ENCODE measurements at regions of chr12 and their contacts with region 1.

Region 1: DNA sequence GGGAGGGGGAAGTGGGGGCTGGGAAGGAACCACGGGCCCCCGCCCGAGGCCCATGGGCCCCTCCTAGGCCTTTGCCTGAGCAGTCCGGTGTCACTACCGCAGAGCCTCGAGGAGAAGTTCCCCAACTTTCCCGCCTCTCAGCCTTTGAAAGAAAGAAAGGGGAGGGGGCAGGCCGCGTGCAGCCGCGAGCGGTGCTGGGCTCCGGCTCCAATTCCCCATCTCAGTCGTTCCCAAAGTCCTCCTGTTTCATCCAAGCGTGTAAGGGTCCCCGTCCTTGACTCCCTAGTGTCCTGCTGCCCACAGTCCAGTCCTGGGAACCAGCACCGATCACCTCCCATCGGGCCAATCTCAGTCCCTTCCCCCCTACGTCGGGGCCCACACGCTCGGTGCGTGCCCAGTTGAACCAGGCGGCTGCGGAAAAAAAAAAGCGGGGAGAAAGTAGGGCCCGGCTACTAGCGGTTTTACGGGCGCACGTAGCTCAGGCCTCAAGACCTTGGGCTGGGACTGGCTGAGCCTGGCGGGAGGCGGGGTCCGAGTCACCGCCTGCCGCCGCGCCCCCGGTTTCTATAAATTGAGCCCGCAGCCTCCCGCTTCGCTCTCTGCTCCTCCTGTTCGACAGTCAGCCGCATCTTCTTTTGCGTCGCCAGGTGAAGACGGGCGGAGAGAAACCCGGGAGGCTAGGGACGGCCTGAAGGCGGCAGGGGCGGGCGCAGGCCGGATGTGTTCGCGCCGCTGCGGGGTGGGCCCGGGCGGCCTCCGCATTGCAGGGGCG is at the start of gene GAPDH:
- DNase-seq: peak; percentile 95
- ATAC-seq: peak; percentile 69
- H3K4me3 ChIP-seq: peak within 1 kb of the TSS; percentile 94 to 99 (median 97)
- H3K27ac ChIP-seq: peak within 1 kb of the TSS; percentile 97
- H3K4me1 ChIP-seq: peaks cover 53% of the 10 kb centered on the region
- H3K27me3 ChIP-seq: no peaks in the 10 kb centered on the region; a peak in 1 of 5 replicates
- CTCF ChIP-seq: no peak
- EP300 ChIP-seq: peak; percentile 14 to 26; a peak in 2 of 4 replicates
- POLR2A ChIP-seq: peak in 1 of 2 experiments; percentile 98; a peak in 2 of 4 replicates
- RAD21 ChIP-seq: no peak
- total RNA-seq, gene GAPDH: 3,038 and 4,052 TPM in 2 replicates

Region 2: DNA sequence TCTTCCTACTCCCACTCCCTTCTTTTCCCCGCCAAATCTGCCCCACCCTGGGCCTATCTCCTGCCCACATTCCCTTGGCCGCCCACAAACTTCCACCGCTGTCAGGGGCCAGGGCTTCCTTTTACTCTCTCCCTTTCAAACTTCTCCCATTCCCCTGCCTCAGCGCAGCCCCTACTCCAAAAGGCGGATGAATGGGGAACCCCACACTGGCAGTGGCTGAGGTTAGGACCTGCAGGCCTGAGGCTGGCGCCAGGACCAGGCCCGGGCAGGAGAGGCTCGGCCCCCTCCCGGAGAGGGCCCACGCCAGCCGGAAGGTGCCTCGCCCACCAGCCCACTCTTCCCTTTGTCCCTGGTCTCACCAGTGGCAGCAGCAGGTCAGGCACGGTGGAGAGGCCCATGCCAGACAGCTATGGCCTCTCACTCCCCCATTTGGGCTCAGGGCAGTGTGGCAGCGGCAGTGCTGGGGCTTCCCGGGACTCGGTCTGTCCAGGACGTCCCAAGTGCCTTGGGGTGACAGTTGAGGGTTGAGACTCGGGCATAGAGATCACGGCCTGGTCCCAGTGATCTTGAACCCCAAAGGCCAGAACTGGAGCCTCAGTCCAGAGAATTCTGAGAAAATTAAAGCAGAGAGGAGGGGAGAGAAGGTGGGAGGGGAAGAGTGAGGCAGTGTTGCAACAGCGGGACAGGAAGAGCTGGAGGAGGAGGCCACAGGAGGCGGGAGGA is 192.5 kb before region 1 on chr12 and contains the start of gene TNFRSF1A:
- CTCF ChIA-PET with region 1: no interaction called
- POLR2A ChIA-PET with region 1: interaction called, 27 read pairs
- in situ Hi-C with region 1: no loop called
- intact Hi-C with region 1: loop called (anchors 10 kb)
- DNase-seq: peak; percentile 65
- ATAC-seq: peak; percentile 56
- H3K4me3 ChIP-seq: peak within 1 kb of the TSS; percentile 85 to 99 (median 97)
- H3K27ac ChIP-seq: peak within 1 kb of the TSS; percentile 82
- H3K4me1 ChIP-seq: peaks cover 80% of the 10 kb centered on the region
- H3K27me3 ChIP-seq: no peaks in the 10 kb centered on the region; a peak in 1 of 5 replicates
- CTCF ChIP-seq: no peak
- EP300 ChIP-seq: peak; percentile 36 to 54; a peak in 1 of 4 replicates
- POLR2A ChIP-seq: no peak; a peak in 1 of 4 replicates
- RAD21 ChIP-seq: no peak; the same call in 1 of the 2 replicates
- total RNA-seq, gene TNFRSF1A: 21.9 and 41.5 TPM in 2 replicates

Region 3: DNA sequence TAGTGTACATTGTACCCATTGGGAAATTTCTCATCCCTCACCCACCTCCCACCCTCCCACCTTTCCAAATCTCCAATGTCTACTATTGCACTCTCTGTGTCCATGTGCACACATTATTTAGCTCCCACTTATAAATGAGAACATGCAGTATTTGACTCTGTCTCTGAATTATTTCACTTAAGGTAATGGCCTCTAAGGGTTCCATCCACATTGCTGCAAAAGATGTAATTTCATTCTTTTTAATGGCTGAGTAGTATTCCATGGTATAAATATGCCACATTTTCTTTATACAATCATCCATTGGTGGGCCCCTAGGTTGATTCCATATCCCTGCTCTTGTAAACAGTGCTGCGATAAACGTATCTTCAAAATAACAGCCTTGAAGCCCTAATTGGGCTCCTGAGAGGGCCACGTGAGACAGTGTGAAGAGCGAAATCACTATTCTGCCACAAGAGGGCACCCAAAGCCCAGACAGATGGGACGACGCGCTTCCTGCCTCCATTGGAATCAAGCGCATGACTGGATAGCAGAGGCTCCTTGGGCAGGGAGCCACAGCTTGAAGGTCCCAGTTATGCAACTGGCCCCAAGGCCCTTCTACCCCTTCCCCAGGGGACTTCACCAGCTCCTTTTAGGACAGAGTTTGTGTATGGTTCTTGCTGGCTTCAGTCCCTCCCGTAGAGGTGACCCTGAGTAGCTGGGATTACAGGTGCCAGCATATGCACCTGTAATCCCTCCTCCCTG is 110.7 kb before region 1 on chr12:
- CTCF ChIA-PET with region 1: no interaction called
- POLR2A ChIA-PET with region 1: interaction called, 9 read pairs
- in situ Hi-C with region 1: loop called (anchors 10 kb)
- intact Hi-C with region 1: loop called (anchors 1 kb)
- DNase-seq: peak; percentile 81
- ATAC-seq: peak; percentile 92
- H3K4me3 ChIP-seq: peak overlapping the region in 1 of 3 experiments; percentile 12; a peak in 1 of 6 replicates
- H3K27ac ChIP-seq: no peak overlapping the region
- H3K4me1 ChIP-seq: peaks cover 63% of the 10 kb centered on the region
- H3K27me3 ChIP-seq: peaks cover 2 to 12% of the 10 kb centered on the region in 2 experiments; a peak in 2 of 5 replicates
- CTCF ChIP-seq: peak; percentile 95
- EP300 ChIP-seq: no peak
- POLR2A ChIP-seq: no peak
- RAD21 ChIP-seq: peak; percentile 84

Region 4: DNA sequence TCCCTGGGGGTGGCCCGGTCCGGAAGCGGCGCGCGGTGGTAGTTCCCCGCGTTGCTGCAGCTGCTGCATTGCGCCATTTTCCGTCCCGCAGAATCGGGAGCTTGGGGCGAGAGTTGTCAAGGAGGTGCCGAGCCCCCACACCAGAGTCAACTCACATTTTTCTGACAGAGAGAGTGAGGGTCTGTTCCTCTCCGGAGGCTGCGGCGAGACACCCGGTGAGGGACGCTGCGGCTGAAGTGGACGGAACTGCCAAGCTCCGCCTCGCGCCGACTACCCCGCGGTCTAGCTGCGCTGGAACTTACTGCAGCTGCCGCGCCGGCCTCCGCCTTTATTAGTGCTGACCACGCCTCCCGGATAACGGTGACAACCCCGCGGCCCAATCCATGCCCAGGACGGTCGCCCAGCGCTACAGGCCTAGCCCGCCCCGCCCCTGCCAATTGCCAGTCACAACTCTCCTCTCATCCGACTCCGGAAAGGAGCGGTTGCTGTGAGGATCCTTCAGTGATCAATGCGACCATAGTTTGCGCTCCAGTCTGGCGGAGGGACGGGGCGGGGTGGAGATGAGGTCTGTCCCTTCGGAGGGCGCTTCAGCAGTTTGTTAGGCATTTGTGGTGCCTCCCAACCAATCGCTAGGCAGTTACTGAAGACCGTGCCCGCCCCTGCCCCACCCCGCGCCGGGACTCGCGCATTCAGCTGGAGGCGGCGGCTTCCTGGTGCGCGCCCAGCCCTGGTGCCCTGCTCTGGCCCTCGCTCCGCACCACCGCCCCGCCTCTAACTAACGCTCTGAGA is 63.5 kb before region 1 on chr12 and contains the start of gene VAMP1:
- CTCF ChIA-PET with region 1: no interaction called
- POLR2A ChIA-PET with region 1: interaction called, 54 read pairs
- in situ Hi-C with region 1: no loop called
- intact Hi-C with region 1: loop called (anchors 10 kb)
- DNase-seq: peak; percentile 97
- ATAC-seq: peak; percentile 96
- H3K4me3 ChIP-seq: peak within 1 kb of the TSS; percentile 69 to 76 (median 74)
- H3K27ac ChIP-seq: peak within 1 kb of the TSS; percentile 56
- H3K4me1 ChIP-seq: peaks cover 44% of the 10 kb centered on the region
- H3K27me3 ChIP-seq: no peaks in the 10 kb centered on the region
- CTCF ChIP-seq: peak; percentile 34
- EP300 ChIP-seq: no peak
- POLR2A ChIP-seq: peak; percentile 99 to 100
- RAD21 ChIP-seq: no peak
- total RNA-seq, gene VAMP1: 0.45 and 2.5 TPM in 2 replicates

Region 5: DNA sequence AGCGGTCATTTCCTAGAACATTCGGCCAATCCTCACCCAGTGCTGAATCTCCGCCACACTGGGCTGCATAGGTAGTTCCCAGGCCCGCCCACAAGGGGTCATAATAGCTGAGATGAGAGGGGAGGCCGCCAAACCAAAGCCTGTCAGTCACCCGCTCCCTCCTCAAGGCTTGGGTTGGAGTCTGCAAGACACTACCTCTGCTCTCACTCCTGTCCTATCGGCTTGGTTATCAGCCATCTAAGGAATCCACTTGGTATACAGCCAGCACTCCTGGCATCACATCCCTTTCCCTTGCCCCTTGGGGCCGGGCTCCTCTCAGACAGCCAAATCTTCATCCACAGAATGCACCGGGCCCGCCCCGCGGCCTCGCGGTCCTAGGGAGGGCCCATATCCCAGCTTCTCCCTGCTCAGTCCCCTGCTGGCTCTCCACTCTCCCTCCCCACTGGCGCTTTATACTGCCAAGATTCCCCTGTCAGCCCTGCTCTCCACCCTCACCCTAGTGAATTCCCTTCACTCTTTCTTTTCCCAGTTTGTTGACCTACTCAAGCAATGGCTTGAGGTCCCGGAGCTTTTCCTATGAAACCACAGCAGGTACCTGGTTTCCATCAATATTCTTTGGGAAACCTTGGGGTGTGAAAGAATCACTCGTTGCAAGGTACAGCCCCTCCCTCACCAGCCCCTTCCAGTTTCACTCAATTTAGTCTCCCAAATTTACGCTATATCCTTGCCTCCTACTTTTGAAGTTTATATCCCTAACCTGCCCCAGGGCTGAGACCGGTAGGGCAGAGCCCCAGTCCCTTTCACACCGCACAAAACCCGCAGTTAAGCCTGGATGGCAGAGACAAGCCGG is 20.3 kb after region 1 on chr12:
- CTCF ChIA-PET with region 1: interaction called, 4 read pairs
- POLR2A ChIA-PET with region 1: interaction called, 108 read pairs
- in situ Hi-C with region 1: no loop called
- intact Hi-C with region 1: no loop called
- DNase-seq: peak; percentile 77
- ATAC-seq: peak; percentile 72
- H3K4me3 ChIP-seq: peak overlapping the region; percentile 77 to 95 (median 92)
- H3K27ac ChIP-seq: peak overlapping the region; percentile 42
- H3K4me1 ChIP-seq: peaks cover 43% of the 10 kb centered on the region
- H3K27me3 ChIP-seq: no peaks in the 10 kb centered on the region; a peak in 1 of 5 replicates
- CTCF ChIP-seq: peak; percentile 86
- EP300 ChIP-seq: no peak
- POLR2A ChIP-seq: 0 out of 4 replicates have a peak, but pooled peaks of 1 of the 2 experiments have one; percentile 25
- RAD21 ChIP-seq: peak; percentile 38; the same call in 1 of the 2 replicates